ENCODE measurements at regions of chr16 and their contacts with region 1.

Region 1: GRCh38 chr16:88437373-88437964 is 15.6 kb upstream of the ZFPM1 start:
- DNase-seq: peak; percentile 95
- H3K4me3 ChIP-seq: peak overlapping the region in 1 of 2 experiments; percentile 52; a peak in 1 of 4 replicates
- H3K27ac ChIP-seq: no peak overlapping the region; a peak in 1 of 4 replicates
- H3K4me1 ChIP-seq: peaks cover 0 to 9% of the 10 kb centered on the region in 2 experiments; a peak in 1 of 4 replicates
- H3K27me3 ChIP-seq: no peaks in the 10 kb centered on the region
- CTCF ChIP-seq: peak; percentile 83
- EP300 ChIP-seq: no peak
- RAD21 ChIP-seq: peak; percentile 79

Region 2: DNA sequence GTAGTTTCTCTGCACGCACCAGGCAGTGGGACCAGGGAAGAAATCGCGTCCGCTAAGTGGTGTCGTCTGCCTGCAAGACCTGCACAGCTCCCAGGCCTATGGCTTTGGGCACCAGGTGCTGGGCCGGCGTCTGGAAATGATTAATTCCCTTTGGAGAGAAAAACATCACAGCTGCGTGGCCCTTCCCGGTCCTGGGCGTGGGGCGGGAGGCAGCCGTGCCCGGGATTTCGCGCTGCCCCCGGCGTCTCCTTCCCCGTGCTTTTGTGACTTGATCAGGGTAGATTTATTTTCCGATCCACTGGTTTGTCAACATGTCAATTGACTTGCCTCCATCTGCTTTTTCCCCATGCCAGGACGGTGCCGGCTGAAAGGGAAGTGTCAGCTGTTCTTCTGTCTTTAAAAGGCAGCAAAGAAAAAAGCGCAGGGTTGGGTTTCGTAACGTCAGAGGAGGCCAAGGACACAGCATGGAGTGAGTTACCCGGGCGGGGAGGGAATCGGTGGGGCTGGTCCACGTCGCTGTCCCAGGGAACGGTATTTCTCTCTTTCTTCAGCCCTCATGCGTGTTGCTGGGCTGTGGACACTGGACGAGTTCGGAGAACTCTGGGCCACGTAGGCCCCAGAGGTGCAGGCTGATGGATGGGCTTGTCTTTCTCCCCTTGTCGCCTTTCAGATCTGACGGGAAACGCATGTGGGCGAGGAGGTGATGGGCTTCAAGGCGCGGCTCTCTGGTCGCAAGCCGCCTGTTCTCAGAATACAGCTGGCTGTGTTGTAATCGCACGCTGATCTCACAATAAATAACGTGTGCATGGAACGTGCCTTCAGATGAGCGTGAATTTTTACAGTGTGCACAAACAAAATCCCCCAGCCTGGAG is 242.8 kb before region 1 on chr16:
- CTCF ChIA-PET with region 1: interaction called, 48 read pairs
- POLR2A ChIA-PET with region 1: no interaction called
- DNase-seq: peak; percentile 87
- H3K4me3 ChIP-seq: no peak overlapping the region; a peak in 1 of 4 replicates
- H3K27ac ChIP-seq: peak overlapping the region in 1 of 2 experiments; percentile 99; a peak in 2 of 4 replicates
- H3K4me1 ChIP-seq: peaks cover 0 to 30% of the 10 kb centered on the region in 2 experiments; a peak in 2 of 4 replicates
- H3K27me3 ChIP-seq: no peaks in the 10 kb centered on the region
- CTCF ChIP-seq: no peak
- EP300 ChIP-seq: peak in 1 of 2 experiments; percentile 60; a peak in 2 of 4 replicates
- RAD21 ChIP-seq: peak; percentile 30; the same call in 1 of the 2 replicates

Region 3: GRCh38 chr16:88405216-88406060 is 32.0 kb before region 1 on chr16:
- CTCF ChIA-PET with region 1: interaction called, 12 read pairs
- POLR2A ChIA-PET with region 1: no interaction called
- DNase-seq: peak; percentile 89
- H3K4me3 ChIP-seq: no peak overlapping the region; a peak in 1 of 4 replicates
- H3K27ac ChIP-seq: peak overlapping the region in 1 of 2 experiments; percentile 91; a peak in 2 of 4 replicates
- H3K4me1 ChIP-seq: peaks cover 0 to 44% of the 10 kb centered on the region in 2 experiments; a peak in 1 of 4 replicates
- H3K27me3 ChIP-seq: no peaks in the 10 kb centered on the region
- CTCF ChIP-seq: no peak
- EP300 ChIP-seq: peak in 1 of 2 experiments; percentile 68; a peak in 2 of 4 replicates
- RAD21 ChIP-seq: peak; percentile 39

Region 4: DNA sequence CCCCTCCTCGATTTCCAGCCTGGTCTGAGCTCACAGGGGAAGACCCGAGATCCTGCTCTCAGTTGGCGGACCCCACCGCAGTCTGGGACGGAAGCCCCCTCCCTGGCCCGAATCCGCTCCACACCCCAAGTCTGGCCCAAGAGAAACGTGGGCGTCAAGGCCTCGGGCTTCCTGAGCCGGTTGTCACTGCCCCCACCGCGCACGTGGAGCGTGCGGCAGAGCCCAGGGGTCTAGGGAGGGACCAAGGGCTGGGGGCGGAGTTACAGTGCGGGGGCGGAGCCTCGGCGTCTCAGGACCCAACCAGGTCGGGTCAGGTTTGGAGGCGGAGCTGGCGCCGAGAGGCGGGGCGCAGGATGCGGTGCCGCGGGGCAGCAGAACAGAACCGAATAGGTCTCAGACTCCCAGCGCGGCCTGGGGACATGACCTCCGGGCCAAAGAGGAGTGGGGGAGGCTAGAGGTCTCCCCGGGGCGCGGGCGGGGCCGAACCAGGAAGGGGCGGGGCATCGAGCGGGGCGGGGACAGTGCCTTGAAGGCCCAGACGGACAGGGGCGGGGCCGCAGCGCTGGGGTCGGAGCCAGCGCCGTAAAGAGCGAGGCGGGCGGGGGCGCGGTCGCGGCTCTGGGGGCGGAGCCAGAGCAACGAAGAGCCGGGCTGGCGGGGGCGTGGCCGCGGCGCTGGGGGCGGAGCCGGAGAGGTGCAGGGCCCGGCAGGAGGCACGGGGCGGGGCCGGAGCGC is 15.2 kb after region 1 on chr16:
- CTCF ChIA-PET with region 1: interaction called, 21 read pairs
- POLR2A ChIA-PET with region 1: no interaction called
- DNase-seq: peak; percentile 98
- H3K4me3 ChIP-seq: peak overlapping the region; percentile 57 to 75
- H3K27ac ChIP-seq: peak overlapping the region; percentile 56 to 86; a peak in 3 of 4 replicates
- H3K4me1 ChIP-seq: peaks cover 13 to 61% of the 10 kb centered on the region in 2 experiments; a peak in 3 of 4 replicates
- H3K27me3 ChIP-seq: no peaks in the 10 kb centered on the region
- CTCF ChIP-seq: no peak
- EP300 ChIP-seq: no peak
- RAD21 ChIP-seq: no peak

Region 5: GRCh38 chr16:88527186-88527936 is 89.9 kb after region 1 on chr16:
- CTCF ChIA-PET with region 1: interaction called, 16 read pairs
- POLR2A ChIA-PET with region 1: no interaction called
- DNase-seq: peak; percentile 95
- H3K4me3 ChIP-seq: peak overlapping the region in 1 of 2 experiments; percentile 48; a peak in 1 of 4 replicates
- H3K27ac ChIP-seq: peak overlapping the region in 1 of 2 experiments; percentile 22; a peak in 1 of 4 replicates
- H3K4me1 ChIP-seq: peaks cover 0 to 9% of the 10 kb centered on the region in 2 experiments; a peak in 1 of 4 replicates
- H3K27me3 ChIP-seq: no peaks in the 10 kb centered on the region
- CTCF ChIP-seq: peak; percentile 69
- EP300 ChIP-seq: no peak
- RAD21 ChIP-seq: peak; percentile 89

Measured in SK-N-SH (cell line).